ENCODE measurements at regions of chr14 and their contacts with region 1.

Region 1: DNA sequence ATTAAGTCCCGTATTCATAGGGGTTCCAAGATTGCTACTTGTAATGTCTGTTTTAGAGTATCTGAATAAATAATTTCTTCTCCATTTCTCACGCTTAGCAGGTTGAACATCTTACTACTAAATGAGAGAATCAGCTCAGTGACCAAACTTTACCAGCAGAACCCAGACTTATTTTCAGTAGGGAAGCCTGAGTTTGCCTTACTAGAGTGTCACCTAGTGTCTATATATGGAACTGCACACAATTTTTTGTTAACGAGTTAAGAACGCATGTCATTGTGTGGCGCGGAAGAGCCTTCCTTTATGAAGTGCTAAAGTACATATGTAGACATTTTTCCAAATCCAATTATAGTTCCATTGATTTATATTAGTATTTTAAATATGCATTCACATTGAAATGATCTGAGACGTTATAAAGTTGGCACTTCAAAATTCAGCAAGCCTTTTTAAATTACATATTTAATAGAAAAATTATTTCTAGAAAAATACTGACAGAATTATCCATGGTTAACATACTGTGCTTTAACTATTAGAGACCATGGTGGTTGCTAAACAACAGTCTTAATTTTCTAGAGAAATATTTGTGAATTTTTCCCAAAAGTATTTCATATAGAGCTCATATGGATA is 88.3 kb downstream of the RPS29 start:
- DNase-seq: peak; percentile 59
- CTCF ChIP-seq: peak; percentile 73

Region 2: DNA sequence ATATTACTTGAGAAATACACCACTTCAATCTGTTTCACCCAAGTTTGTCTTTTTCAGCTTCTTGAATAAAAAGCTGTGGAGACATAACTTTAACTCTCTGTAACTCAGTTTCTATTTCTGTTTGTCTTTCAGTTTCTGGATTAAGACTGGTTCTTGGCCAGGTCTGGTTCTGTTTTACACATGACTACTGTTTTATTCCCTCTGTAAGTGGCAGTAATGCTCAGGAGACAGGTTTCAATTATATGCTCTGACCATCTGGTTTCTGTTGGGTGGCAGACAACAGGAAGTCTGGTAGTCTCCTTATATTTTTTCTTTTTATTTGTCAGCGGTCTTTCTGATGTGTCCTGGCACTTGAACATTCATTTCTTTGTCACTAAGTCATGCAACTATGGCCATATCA is 14.6 kb before region 1 on chr14:
- CTCF ChIA-PET with region 1: interaction called, 22 read pairs
- POLR2A ChIA-PET with region 1: no interaction called
- DNase-seq: no peak
- CTCF ChIP-seq: no peak

Measured in GM10248 (cell line).